Dorsolateral prefrontal cortex (tissue), 120 donors: ENCODE measurements at regions of chr3 and their contacts with region 1.

Region 1: DNA sequence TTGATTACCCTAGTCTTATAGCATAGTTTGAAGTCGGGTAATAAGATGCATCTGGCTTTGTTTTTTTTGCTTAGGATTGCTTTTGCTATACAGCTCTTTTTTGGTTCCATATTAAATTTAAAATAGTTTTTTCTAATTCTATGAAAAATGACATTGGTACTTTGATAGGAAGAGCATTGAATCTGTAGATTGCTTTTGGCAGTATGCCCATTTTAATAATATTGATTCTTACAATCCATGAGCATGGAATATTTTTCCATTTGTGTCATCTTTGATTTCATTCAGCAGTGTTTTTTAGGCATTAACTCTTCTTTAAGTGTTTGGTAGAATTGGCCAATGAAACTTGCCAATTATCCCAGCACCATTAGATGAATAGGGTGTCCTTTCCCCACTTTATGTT is 46.1 kb upstream of the TBC1D5 start:
- DNase-seq: no peak
- H3K4me3 ChIP-seq: no peak overlapping the region
- H3K27ac ChIP-seq: no peak overlapping the region
- H3K27me3 ChIP-seq: no peaks in the 10 kb centered on the region
- CTCF ChIP-seq: no peak

Region 2: DNA sequence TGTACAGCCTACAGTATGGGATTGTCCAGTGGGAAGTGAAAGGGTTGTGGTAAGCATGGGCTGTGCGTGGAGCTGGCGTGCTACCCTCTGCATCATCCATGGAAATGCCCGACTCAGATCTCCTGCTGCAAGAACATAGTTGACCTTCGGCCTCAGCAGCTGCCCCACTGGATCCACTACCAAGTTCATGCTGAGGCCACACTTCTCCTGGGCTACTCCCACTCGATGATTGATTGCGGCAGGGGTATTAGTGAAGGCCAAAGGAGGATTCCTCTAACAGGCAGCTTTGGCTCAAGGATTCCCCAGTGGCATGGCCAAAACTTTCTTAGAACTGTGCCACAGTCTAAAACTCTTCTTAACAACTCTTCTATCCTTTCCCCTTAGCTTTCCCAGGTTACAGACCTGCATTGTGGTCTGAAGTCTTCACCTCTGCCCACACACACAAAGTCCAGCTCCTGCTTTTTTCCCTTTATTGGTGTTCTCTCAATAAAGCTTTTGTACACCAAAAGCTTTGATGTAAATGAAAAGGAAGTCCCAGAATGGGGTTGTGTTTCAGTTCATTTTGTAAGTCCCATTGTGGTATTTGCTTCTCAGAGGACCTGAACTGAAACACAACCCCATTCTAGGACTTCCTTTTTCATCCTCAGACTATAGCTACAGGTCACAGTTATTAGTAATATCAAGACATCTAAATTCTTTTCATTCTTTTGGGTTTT is 41.2 kb before region 1 on chr3:
- intact Hi-C with region 1: loop called in 1 of 2 experiments (anchors 5 kb)
- DNase-seq: no peak
- H3K4me3 ChIP-seq: no peak overlapping the region
- H3K27ac ChIP-seq: no peak overlapping the region
- H3K27me3 ChIP-seq: no peaks in the 10 kb centered on the region
- CTCF ChIP-seq: no peak